ENCODE measurements at regions of chr14 and their contacts with region 1.

Region 1: GRCh38 chr14:72516936-72517700 is 376.8 kb downstream of the DPF3 start:
- DNase-seq: peak in 3 of 4 donors; percentile 62 to 82 (median 74)
- ATAC-seq: peak; percentile 94
- H3K4me3 ChIP-seq: no peak overlapping the region
- H3K27ac ChIP-seq: no peak overlapping the region
- H3K4me1 ChIP-seq: peaks cover 0 to 7% of the 10 kb centered on the region in 2 donors
- H3K27me3 ChIP-seq: no peaks in the 10 kb centered on the region
- CTCF ChIP-seq: peak; percentile 82 to 88

Region 2: DNA sequence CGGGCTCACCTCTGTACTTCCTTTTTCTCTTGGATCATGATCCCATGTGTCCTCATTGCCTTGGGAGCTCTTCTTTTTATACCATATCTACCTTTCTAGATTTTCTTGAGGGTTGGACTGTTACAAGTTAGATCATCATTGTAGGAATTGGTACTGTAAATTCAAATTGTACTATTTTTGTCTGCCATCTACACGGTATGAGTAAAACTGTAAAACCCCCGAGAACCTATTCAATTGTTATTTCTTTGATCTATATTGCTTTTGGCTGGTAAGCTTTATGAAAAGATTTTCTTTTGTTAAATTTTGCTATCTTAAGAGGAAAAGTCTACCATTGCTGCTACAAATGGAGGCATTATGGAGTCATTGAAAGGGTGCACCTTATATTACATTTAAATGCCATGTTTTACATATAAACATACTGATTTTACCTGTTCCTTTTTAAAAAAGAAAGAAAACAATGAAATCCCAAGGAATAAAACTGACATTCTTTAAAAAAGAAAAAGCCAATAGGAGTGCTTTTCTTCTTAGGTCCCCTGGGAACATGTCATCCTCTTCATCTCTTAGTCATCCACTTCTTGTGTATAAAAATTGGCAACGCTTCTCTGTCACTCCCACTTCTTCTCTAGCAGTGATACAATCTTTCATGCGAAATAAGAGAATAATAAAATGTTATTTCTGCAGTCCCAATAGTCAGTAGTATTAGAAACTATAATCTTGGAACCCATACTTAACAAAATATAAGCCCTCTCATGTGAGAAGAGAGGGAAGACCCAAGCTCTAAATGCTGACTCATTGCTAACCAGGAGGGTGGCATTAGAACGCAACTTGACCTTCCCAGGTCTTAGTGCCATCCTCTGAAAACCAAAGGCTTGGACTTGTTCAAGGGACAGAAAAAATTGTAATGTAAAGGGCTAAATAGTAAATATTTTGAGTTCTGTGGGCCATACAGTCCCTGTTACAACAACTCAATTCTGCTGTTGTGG is 564.4 kb before region 1 on chr14:
- intact Hi-C with region 1: no loop called
- DNase-seq: no peak
- ATAC-seq: no peak
- H3K4me3 ChIP-seq: no peak overlapping the region
- H3K27ac ChIP-seq: no peak overlapping the region
- H3K4me1 ChIP-seq: no peaks in the 10 kb centered on the region
- H3K27me3 ChIP-seq: no peaks in the 10 kb centered on the region
- CTCF ChIP-seq: no peak

Region 3: DNA sequence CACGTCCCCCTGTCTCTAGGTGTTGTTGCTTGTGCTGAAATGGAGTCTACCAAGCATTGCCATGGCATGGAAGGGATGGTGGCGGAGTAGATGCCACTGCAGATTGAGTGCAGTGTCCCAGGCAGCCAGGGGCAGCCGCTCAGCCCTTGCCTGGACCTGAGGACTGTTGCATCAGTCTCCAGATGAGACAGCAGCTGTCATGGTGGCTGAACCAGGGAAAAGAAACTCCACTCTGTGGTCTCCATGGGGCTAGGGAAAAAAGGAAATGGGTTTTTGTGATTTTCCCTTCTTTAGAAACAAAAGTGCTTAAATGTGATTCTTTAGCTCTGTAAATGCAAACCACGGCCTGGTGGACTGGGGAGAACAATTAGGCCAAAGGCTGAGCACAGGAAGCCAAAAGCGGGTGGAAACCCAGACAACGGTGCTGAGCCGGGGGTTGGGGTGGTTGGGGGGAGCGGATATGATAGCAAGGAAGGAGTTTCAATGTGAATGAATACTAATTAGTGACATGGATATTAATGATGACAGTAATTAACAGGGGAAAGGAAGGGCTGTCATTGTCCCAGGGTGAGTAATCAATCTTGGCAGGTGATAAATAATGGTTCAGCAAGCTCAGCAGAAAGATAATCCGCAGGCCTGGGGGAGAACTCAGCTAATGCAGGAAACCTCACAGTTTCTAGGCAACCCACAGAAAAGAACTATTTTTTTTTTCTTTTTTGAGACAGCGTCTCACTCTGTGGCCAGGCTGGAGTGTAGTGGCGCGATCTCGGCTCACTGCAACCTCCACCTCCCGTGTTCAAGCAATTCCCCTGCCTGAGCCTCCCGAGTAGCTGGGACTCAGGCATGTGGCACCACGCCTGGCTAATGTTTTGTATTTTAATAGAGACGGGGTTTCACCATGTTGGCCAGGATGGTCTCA is 65.8 kb before region 1 on chr14:
- intact Hi-C with region 1: no loop called
- DNase-seq: no peak
- ATAC-seq: peak; percentile 35
- H3K4me3 ChIP-seq: no peak overlapping the region
- H3K27ac ChIP-seq: no peak overlapping the region
- H3K4me1 ChIP-seq: peaks cover 0 to 3% of the 10 kb centered on the region in 2 donors
- H3K27me3 ChIP-seq: peaks cover 0 to 7% of the 10 kb centered on the region in 2 donors
- CTCF ChIP-seq: no peak

Region 4: DNA sequence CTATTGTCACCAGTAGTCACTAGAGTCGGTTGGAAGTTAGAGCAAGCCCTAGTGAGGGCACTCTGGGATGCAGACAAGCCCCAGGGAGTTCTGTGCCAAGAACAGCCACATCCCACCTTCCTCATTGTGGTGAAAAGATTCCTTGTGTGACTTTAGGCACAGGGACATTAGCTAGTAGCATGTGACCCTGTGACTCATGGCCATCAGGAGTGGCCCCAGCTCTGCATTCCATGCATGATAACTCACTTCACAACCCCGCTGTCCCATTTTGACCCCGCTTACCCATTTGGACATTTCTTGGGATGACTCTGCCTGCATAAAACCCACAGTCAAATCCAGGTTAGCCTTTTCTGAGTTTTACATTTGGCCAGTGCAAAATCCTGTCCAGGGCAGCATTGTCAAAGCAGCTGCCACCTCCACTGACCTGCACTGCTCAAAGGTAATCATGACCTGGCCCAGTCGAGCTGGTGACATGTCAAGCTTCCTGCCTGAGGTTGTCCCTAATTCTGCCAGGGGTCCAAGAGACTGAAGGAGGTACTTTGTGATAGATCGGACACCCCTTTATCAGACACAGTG is 53.7 kb before region 1 on chr14:
- intact Hi-C with region 1: no loop called
- DNase-seq: no peak
- ATAC-seq: no peak
- H3K4me3 ChIP-seq: no peak overlapping the region
- H3K27ac ChIP-seq: no peak overlapping the region
- H3K4me1 ChIP-seq: no peaks in the 10 kb centered on the region
- H3K27me3 ChIP-seq: no peaks in the 10 kb centered on the region
- CTCF ChIP-seq: no peak

Region 5: DNA sequence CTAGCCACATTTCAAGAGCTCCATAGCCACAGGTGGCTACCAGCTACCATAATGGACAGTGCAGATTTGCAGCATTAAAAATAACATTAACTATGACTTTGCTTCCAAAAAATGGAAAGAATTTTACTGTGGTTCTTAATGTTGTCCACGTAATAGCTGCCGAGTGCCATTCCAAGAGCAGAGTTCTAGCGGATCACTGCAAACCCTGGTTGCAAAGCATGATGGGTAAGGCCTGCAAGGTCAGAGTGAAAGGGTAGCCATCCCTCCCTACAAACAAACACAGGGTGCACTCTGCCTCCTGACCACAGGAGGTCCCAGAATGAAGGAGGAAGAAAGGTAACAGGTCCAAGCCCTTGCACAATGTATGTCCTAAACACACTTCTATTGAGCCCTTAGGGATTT is 219.2 kb after region 1 on chr14:
- intact Hi-C with region 1: no loop called
- DNase-seq: no peak
- ATAC-seq: no peak
- H3K4me3 ChIP-seq: no peak overlapping the region
- H3K27ac ChIP-seq: no peak overlapping the region
- H3K4me1 ChIP-seq: no peaks in the 10 kb centered on the region
- H3K27me3 ChIP-seq: no peaks in the 10 kb centered on the region
- CTCF ChIP-seq: no peak

Region 6: DNA sequence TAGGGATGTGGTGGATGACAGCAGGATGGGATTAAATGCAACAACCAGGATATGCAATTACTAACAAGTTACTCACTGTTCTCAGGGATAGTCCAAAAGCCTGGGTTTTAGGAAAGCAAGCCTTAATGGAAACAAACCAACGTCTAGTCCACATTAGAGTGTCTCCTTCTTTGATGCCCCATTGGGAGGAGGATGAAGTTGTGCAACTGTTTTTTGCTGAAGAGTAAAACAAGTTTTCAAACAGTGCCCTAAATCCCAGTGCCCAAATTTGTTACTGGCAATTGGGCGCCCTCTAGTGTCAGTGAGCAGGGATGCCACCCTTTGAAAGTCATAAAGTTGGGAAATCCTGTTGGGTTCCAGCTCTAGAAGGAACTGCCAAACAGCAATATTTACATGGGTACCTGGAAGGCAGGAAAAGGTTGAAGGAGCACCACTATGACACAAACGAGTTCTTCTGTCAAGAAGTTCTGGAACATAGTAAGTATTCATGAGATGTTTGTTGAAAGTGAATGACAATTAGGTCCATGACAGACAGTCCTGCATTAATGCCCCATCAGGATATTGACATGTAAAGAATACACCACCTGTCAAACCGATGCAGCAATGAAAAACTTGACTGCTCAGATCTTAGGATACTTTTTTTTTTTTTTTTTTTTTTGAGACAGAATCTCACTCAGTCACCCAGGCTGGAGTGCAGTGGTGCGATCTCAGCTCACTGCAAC is 387.9 kb after region 1 on chr14:
- intact Hi-C with region 1: loop called (anchors 2 to 10 kb)
- DNase-seq: peak in 2 of 4 donors; percentile 77 to 85
- ATAC-seq: peak; percentile 91
- H3K4me3 ChIP-seq: no peak overlapping the region
- H3K27ac ChIP-seq: no peak overlapping the region
- H3K4me1 ChIP-seq: no peaks in the 10 kb centered on the region
- H3K27me3 ChIP-seq: peaks cover 0 to 14% of the 10 kb centered on the region in 2 donors
- CTCF ChIP-seq: peak; percentile 84 to 88

Region 7: DNA sequence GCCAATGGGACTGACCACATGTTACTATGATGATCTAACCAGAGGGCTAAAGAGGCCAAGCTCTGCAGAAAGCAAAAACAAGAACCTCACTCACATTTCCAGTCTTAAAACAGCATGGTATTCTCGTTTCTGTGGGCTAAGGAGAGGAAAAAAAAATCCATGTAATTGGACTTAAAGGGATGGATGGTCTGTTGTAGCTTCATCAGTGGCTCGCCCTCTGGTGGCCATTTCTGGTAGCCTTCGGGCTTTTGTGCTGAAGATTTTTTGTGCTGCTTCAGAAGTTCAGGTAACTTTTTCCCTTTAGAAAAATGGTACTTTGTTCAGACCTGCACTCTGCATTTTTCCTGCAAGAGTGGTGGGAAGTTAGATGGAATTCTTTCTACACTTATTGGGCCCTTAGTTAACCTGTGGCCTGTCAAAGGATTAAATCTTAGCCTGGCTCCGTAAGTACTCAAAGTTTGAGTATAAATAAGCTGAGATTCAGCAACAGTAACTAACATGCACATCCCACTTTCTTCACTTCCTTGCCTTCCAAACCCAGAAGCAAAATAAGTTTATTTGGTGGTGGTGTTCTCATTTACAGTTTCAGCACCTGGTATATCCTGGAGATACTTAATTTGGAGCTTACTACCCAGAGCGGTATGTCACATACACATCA is 431.5 kb after region 1 on chr14:
- intact Hi-C with region 1: loop called in 1 of 2 experiments (anchors 10 kb)
- DNase-seq: peak in 2 of 4 donors; percentile 14 to 51
- ATAC-seq: peak; percentile 77
- H3K4me3 ChIP-seq: no peak overlapping the region
- H3K27ac ChIP-seq: no peak overlapping the region
- H3K4me1 ChIP-seq: no peaks in the 10 kb centered on the region
- H3K27me3 ChIP-seq: no peaks in the 10 kb centered on the region
- CTCF ChIP-seq: peak; percentile 71 to 91

Measured in left lung (tissue), 14 donors.